ENCODE measurements at regions of chr2 and their contacts with region 1.

Region 1: GRCh38 chr2:222690564-222691200 is 19.2 kb downstream of the MOGAT1 start:
- DNase-seq: peak; percentile 81
- ATAC-seq: peak; percentile 92
- H3K4me3 ChIP-seq: no peak overlapping the region
- H3K27ac ChIP-seq: no peak overlapping the region
- H3K4me1 ChIP-seq: peaks cover 12% of the 10 kb centered on the region
- H3K27me3 ChIP-seq: no peaks in the 10 kb centered on the region
- CTCF ChIP-seq: peak; percentile 99
- EP300 ChIP-seq: peak in 1 of 2 experiments; percentile 20; a peak in 1 of 4 replicates
- POLR2A ChIP-seq: no peak
- RAD21 ChIP-seq: peak; percentile 97

Region 2: GRCh38 chr2:222468346-222468745 is 222.3 kb before region 1 on chr2:
- CTCF ChIA-PET with region 1: no interaction called
- POLR2A ChIA-PET with region 1: no interaction called
- in situ Hi-C with region 1: no loop called
- intact Hi-C with region 1: no loop called
- DNase-seq: peak; percentile 27
- ATAC-seq: no peak; the same call in 2 of the 3 replicates
- H3K4me3 ChIP-seq: no peak overlapping the region
- H3K27ac ChIP-seq: no peak overlapping the region
- H3K4me1 ChIP-seq: no peaks in the 10 kb centered on the region
- H3K27me3 ChIP-seq: peaks cover 0 to 11% of the 10 kb centered on the region in 2 experiments; a peak in 2 of 5 replicates
- CTCF ChIP-seq: no peak
- EP300 ChIP-seq: no peak
- POLR2A ChIP-seq: no peak
- RAD21 ChIP-seq: no peak

Region 3: GRCh38 chr2:222860740-222861410 is 170.2 kb after region 1 on chr2 and contains the start of gene ACSL3:
- CTCF ChIA-PET with region 1: interaction called, 10 read pairs
- POLR2A ChIA-PET with region 1: no interaction called
- in situ Hi-C with region 1: no loop called
- intact Hi-C with region 1: loop called (anchors 1 kb)
- DNase-seq: peak; percentile 92
- ATAC-seq: peak; percentile 98
- H3K4me3 ChIP-seq: peak within 1 kb of the TSS; percentile 81 to 99 (median 99)
- H3K27ac ChIP-seq: peak within 1 kb of the TSS; percentile 82
- H3K4me1 ChIP-seq: peaks cover 36% of the 10 kb centered on the region
- H3K27me3 ChIP-seq: no peaks in the 10 kb centered on the region; a peak in 1 of 5 replicates
- CTCF ChIP-seq: peak; percentile 32; the same call in 1 of the 2 replicates
- EP300 ChIP-seq: peak in 1 of 2 experiments; percentile 65
- POLR2A ChIP-seq: peak; percentile 99 to 100
- RAD21 ChIP-seq: peak; percentile 83
- total RNA-seq, gene ACSL3: 168 and 305 TPM in 2 replicates

Region 4: DNA sequence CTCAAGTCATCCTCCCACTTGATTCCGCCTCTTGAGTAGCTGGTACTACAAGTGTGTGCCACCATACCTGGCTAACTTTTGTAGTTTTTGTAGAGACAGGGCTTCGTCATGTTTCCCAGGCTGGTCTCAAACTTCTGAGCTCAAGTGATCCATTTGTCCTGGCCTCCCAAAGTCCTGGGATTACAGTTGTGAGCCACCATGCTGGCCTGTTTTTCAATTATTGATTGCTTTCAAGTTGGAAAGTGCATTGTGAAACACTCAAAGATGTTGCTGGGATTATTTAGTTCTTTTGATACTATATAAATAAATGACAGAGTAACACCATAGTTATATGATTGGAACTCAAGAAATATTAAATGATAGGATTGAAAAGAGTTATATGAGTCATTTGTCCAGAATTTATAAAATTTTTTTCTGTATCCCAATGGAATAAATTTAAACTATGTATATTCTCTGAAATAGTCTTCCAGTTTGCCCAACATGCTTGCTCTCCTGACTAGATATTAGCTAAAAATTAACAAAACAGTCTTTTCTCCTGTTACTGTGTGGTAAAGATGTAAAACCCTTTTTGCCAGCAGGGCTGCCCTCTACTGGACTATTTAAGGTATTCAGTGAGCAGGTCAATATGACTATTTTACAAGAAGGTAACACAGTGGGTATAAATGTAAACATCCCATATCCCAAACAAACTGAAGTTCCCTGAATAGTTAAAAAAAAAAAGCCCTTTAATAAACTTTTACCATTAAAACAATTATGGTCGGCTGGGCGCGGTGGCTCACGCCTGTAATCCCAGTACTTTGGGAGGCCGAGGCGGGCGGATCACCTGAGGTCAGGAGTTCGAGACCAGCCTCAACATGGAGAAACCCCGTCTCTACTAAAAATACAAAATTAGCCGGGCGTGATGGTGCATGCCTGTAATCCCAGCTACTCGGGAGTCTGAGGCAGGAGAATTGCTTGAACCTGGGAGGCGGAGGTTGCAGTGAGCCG is 212.8 kb after region 1 on chr2:
- CTCF ChIA-PET with region 1: interaction called, 108 read pairs
- POLR2A ChIA-PET with region 1: no interaction called
- in situ Hi-C with region 1: loop called (anchors 5 kb)
- intact Hi-C with region 1: loop called (anchors 1 kb)
- DNase-seq: peak; percentile 86
- ATAC-seq: peak; percentile 76
- H3K4me3 ChIP-seq: no peak overlapping the region
- H3K27ac ChIP-seq: peak overlapping the region; percentile 48
- H3K4me1 ChIP-seq: peaks cover 100% of the 10 kb centered on the region
- H3K27me3 ChIP-seq: no peaks in the 10 kb centered on the region
- CTCF ChIP-seq: peak; percentile 81
- EP300 ChIP-seq: peak in 1 of 2 experiments; percentile 33; a peak in 1 of 4 replicates
- POLR2A ChIP-seq: no peak
- RAD21 ChIP-seq: peak; percentile 89

Region 5: GRCh38 chr2:222915092-222915957 is 224.6 kb after region 1 on chr2:
- CTCF ChIA-PET with region 1: interaction called, 32 read pairs
- POLR2A ChIA-PET with region 1: no interaction called
- in situ Hi-C with region 1: no loop called
- intact Hi-C with region 1: no loop called
- DNase-seq: no peak
- ATAC-seq: no peak
- H3K4me3 ChIP-seq: no peak overlapping the region
- H3K27ac ChIP-seq: no peak overlapping the region
- H3K4me1 ChIP-seq: peaks cover 66% of the 10 kb centered on the region
- H3K27me3 ChIP-seq: no peaks in the 10 kb centered on the region
- CTCF ChIP-seq: no peak; the same call in 1 of the 2 replicates
- EP300 ChIP-seq: no peak
- POLR2A ChIP-seq: no peak
- RAD21 ChIP-seq: no peak

Region 6: DNA sequence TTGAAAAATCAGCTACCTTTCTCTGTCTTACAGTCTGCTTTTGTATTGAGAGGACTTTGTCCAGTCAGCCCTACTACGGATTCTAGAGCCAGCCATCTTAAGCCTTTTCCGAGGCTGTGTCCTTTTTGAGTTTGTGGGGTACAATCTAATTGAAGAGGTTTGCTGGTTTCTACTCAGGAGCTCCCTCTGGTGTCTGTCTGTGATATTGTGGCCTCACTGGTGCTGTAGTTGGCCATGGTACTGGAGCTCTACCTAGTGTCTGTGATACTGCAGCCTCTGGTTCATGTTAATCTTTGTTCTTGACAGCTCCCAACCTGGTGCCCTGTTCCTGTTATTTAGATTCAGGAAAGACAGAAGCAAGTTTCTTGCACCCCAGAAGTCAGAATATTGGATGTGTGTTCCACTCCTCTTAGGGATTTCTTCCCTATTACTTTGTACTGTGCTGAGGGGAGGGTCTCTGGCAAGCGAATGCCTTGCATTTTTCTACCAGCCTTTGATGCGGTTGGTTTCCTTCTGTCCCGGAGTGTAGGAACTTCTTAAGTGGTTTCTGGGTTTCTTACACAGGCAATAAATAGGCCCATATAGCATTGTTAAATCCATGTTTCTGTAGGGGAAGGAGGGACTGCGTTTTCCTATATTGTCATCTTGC is 248.7 kb after region 1 on chr2:
- CTCF ChIA-PET with region 1: interaction called, 106 read pairs
- POLR2A ChIA-PET with region 1: no interaction called
- in situ Hi-C with region 1: no loop called
- intact Hi-C with region 1: loop called (anchors 1 kb)
- DNase-seq: peak; percentile 79
- ATAC-seq: peak; percentile 89
- H3K4me3 ChIP-seq: no peak overlapping the region
- H3K27ac ChIP-seq: no peak overlapping the region
- H3K4me1 ChIP-seq: no peaks in the 10 kb centered on the region
- H3K27me3 ChIP-seq: no peaks in the 10 kb centered on the region
- CTCF ChIP-seq: peak; percentile 86
- EP300 ChIP-seq: no peak
- POLR2A ChIP-seq: no peak
- RAD21 ChIP-seq: peak; percentile 83

Region 7: GRCh38 chr2:223093436-223094241 is 403.0 kb after region 1 on chr2:
- CTCF ChIA-PET with region 1: no interaction called
- POLR2A ChIA-PET with region 1: no interaction called
- in situ Hi-C with region 1: loop called (anchors 25 kb)
- intact Hi-C with region 1: no loop called
- DNase-seq: no peak
- ATAC-seq: no peak
- H3K4me3 ChIP-seq: no peak overlapping the region
- H3K27ac ChIP-seq: no peak overlapping the region
- H3K4me1 ChIP-seq: no peaks in the 10 kb centered on the region
- H3K27me3 ChIP-seq: peaks cover 0 to 6% of the 10 kb centered on the region in 2 experiments; a peak in 1 of 5 replicates
- CTCF ChIP-seq: no peak
- EP300 ChIP-seq: no peak
- POLR2A ChIP-seq: no peak
- RAD21 ChIP-seq: no peak

Region 8: DNA sequence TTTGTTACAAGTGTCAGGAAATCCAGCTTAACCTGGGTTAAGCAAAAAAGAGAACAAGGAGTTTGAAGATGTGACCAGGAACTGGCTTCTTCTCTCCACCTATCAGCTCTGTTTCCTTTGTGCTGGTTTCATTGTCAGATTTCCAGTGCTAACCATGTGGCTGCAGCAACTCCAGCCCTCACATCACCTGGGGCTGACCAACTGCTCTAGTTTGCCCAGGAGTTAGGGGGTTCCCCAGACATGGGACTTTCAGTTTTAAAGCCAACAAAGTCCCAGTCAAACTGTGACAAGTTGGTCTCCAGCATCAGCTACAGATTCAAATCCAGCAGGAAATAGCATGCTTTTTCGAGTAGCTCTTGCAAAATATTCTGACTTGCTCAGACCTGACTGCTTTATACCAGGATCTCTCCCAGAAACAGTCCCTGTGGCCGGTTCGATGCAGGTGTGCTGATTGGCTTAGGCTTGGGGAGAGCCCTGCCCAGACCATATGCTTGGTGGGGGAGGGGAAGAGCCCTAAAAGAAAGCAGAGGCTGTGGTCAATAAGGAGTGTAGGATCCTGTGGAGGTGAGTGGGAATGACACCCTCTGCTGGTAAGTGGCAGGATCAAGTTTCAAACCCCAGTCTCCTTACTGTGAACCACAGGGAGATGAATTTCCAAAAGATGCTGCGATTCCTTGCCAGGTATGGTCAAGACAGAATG is 410.8 kb after region 1 on chr2:
- CTCF ChIA-PET with region 1: interaction called, 11 read pairs
- POLR2A ChIA-PET with region 1: no interaction called
- in situ Hi-C with region 1: loop called (anchors 25 kb)
- intact Hi-C with region 1: loop called (anchors 1 kb)
- DNase-seq: peak; percentile 31
- ATAC-seq: peak; percentile 98
- H3K4me3 ChIP-seq: no peak overlapping the region
- H3K27ac ChIP-seq: no peak overlapping the region
- H3K4me1 ChIP-seq: no peaks in the 10 kb centered on the region
- H3K27me3 ChIP-seq: 0 out of 5 replicates have a peak, but pooled peaks cover 1 to 8% of the 10 kb centered on the region in 2 experiments
- CTCF ChIP-seq: peak; percentile 78
- EP300 ChIP-seq: no peak
- POLR2A ChIP-seq: no peak
- RAD21 ChIP-seq: peak; percentile 54; the same call in 1 of the 2 replicates

Measured in HepG2 (cell line).